RWPE1 (cell line): ENCODE measurements at regions of chr11 and their contacts with region 1.

Region 1: DNA sequence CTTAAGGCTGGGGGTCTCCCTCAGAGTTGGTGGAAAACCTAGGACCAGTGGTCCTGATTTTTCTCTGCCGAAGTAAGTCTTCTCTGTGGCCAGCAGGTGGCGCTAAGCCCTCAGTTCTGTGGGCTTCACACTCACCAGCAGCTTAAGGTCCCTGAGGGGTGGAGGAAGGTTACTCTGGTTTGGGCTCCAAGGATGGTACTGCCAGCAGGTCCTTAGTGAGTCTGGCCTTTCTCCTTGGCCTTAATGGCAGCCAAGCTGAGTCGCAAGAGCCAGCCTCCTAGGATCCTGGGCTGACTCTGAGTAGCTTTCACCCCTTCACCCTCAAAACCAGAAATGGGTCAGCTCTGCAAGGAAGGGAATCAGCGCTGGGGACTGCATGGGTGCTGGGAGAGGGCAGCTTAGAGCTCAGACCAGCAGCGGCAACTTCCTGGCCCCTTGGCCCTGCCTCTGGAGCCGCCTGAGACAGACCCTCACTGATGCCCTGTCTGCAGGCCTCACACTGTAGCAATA is 4.4 kb downstream of the KCNJ11 start:
- DNase-seq: peak; percentile 50
- H3K27ac ChIP-seq: no peak overlapping the region
- CTCF ChIP-seq: peak; percentile 87

Region 2: DNA sequence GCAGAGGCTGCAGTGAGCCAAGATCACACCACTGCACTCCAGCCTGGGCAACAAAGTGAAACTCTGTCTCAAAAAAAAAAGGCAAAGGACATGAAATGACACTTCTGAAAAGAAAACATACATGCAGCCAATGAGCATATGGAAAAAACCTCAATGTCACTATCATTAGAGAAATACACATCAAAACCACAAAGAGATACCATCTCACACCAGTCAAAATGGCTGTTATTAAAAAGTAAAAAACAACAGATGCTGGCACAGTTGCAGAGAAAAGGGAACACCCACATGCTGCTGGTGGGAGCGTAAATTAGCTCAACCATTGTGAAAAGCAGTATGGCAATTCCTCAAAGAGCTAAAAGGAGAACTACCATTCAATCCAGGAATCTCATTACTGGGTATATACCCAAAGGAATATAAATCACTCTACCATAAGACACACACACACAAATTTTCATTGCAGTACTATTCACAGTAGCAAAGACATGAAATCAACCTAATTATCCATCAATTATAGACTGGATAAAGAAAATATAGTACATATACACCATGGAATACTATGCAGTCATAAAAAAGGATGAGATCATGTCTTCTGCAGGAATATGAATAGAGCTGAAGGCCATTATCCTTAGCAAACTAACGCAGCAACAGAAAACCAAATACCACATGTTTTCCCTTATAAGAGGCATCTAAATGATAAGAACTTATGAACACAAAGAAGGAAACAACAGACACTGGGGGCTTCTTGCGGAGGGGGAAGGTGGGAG is 661.3 kb before region 1 on chr11:
- CTCF ChIA-PET with region 1: no interaction called
- POLR2A ChIA-PET with region 1: no interaction called
- DNase-seq: no peak
- H3K27ac ChIP-seq: no peak overlapping the region
- CTCF ChIP-seq: no peak

Region 3: GRCh38 chr11:17129003-17129402 is 255.1 kb before region 1 on chr11:
- CTCF ChIA-PET with region 1: no interaction called
- POLR2A ChIA-PET with region 1: no interaction called
- DNase-seq: peak; percentile 44
- H3K27ac ChIP-seq: no peak overlapping the region
- CTCF ChIP-seq: no peak

Region 4: GRCh38 chr11:17221968-17222367 is 162.1 kb before region 1 on chr11:
- CTCF ChIA-PET with region 1: no interaction called
- POLR2A ChIA-PET with region 1: no interaction called
- DNase-seq: no peak
- H3K27ac ChIP-seq: no peak overlapping the region
- CTCF ChIP-seq: no peak

Region 5: GRCh38 chr11:17354601-17354991 is 29.5 kb before region 1 on chr11:
- CTCF ChIA-PET with region 1: no interaction called
- POLR2A ChIA-PET with region 1: no interaction called
- DNase-seq: peak; percentile 65
- H3K27ac ChIP-seq: no peak overlapping the region
- CTCF ChIP-seq: peak; percentile 73

Region 6: GRCh38 chr11:17504330-17505107 is 120.5 kb after region 1 on chr11:
- CTCF ChIA-PET with region 1: interaction called, 41 read pairs
- POLR2A ChIA-PET with region 1: no interaction called
- DNase-seq: peak; percentile 76
- H3K27ac ChIP-seq: no peak overlapping the region
- CTCF ChIP-seq: peak; percentile 74

Region 7: DNA sequence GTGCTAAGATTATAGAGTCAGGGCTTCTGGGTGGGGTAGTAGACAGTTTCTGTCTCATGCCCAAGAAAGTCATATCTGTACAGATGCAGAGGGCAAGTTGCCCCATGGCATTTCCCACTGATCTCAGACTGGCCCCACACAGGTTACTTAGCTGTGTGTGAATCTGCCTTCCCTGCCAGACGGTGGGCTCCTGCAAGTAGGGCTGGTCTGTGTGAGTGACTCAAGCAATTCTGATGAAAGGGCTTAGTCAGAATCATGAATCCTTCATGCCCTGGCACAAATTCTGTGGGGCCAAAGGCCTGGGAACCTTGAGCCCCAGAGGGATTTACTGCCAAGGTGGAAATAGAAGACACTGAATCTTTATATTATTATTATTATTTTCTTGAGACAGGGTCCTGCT is 129.8 kb after region 1 on chr11:
- CTCF ChIA-PET with region 1: interaction called, 13 read pairs
- POLR2A ChIA-PET with region 1: no interaction called
- DNase-seq: no peak
- H3K27ac ChIP-seq: no peak overlapping the region
- CTCF ChIP-seq: no peak

Region 8: DNA sequence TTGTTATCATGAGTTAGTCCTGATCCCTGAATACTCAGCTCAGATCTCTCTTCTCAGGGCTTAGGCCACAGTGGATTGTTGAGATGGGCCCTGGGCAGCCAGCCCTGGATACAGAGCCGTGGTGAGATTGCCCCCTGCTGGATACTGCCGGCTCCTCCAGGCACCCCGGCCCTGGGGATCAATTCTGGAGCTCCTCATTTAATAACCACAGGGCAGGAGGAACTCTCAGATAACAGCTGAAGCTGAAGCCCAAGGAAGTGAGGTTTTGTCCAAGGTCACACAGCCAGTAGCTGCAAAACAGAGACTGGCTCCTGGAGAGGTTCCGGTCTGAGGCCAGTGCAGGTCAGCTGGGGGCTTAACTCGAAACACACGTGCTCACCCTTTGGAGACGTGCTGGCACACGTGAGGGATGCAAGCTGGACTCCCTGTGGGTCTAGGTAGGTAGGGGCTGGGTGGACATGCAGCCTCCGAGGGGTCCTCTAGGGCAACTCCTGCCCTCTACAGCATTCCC is 144.2 kb after region 1 on chr11:
- CTCF ChIA-PET with region 1: interaction called, 20 read pairs
- POLR2A ChIA-PET with region 1: no interaction called
- DNase-seq: peak; percentile 56
- H3K27ac ChIP-seq: no peak overlapping the region
- CTCF ChIP-seq: peak; percentile 56